CD8-positive, alpha-beta T cell (primary cell): ENCODE measurements at regions of chr13 and their contacts with region 1.

Region 1: DNA sequence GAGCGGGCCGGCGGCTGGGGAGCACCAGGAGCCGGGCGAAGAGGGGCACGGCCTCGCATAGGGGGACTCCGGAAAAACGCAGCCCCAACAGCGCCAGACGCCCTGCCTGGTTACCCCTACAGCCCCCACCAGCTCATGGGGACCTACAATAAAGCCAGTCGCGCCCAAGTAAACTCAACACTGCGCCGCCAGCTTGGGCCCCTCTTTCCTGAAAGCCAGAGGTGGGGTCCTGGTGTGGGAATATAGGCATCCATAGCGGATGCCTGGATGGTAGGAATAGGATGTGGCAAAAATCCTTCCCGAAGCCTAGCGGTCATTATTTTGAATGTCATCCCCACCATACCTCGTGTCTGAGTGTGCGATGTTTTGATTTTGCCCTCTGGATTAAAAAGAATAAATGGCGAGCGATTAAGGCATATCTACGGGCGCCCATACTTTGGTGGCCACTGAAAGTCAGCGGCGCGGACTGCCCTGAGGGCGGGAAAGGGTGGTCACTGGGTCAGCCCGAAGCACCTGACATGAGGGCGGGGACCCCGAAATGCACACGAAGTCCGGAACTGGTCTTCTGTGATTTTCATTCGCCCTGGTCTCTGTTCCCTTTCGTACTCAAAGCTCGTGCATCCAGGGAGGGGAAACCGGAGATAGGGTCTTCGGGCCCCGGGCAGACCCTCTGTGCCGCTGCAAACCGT is at the starts of genes NHLRC3 and PROSER1:
- DNase-seq: peak; percentile 76 to 95 (median 88)
- ATAC-seq: peak; percentile 89
- H3K4me3 ChIP-seq: peak within 1 kb of the TSS; percentile 66 to 93
- H3K4me3 Mint-ChIP-seq: peak within 1 kb of the TSS; percentile 94
- H3K27ac ChIP-seq: peak within 1 kb of the TSS; percentile 79 to 81
- H3K27ac Mint-ChIP-seq: peak within 1 kb of the TSS; percentile 99
- H3K4me1 ChIP-seq: peaks cover 30% of the 10 kb centered on the region
- H3K4me1 Mint-ChIP-seq: peaks cover 63% of the 10 kb centered on the region
- H3K27me3 ChIP-seq: no peaks in the 10 kb centered on the region
- H3K27me3 Mint-ChIP-seq: no peaks in the 10 kb centered on the region
- CTCF ChIP-seq: no peak
- total RNA-seq, gene NHLRC3: 8.2 to 9.3 TPM
- total RNA-seq, gene PROSER1: 51.8 to 52.4 TPM

Region 2: GRCh38 chr13:37058910-37059847 is 1978.8 kb before region 1 on chr13 and contains the start of gene SUPT20H:
- CTCF ChIA-PET with region 1: no interaction called
- POLR2A ChIA-PET with region 1: interaction called, 4 read pairs
- intact Hi-C with region 1: loop called (anchors 2 to 5 kb)
- DNase-seq: peak; percentile 90 to 97 (median 95)
- ATAC-seq: peak; percentile 91
- H3K4me3 ChIP-seq: peak within 1 kb of the TSS; percentile 93 to 96
- H3K4me3 Mint-ChIP-seq: peak within 1 kb of the TSS; percentile 90
- H3K27ac ChIP-seq: peak within 1 kb of the TSS; percentile 95 to 96
- H3K27ac Mint-ChIP-seq: peak within 1 kb of the TSS; percentile 99
- H3K4me1 ChIP-seq: peaks cover 24% of the 10 kb centered on the region
- H3K4me1 Mint-ChIP-seq: peaks cover 50% of the 10 kb centered on the region
- H3K27me3 ChIP-seq: no peaks in the 10 kb centered on the region
- H3K27me3 Mint-ChIP-seq: no peaks in the 10 kb centered on the region
- CTCF ChIP-seq: no peak
- total RNA-seq, gene SUPT20H: 53.0 to 55.0 TPM

Region 3: DNA sequence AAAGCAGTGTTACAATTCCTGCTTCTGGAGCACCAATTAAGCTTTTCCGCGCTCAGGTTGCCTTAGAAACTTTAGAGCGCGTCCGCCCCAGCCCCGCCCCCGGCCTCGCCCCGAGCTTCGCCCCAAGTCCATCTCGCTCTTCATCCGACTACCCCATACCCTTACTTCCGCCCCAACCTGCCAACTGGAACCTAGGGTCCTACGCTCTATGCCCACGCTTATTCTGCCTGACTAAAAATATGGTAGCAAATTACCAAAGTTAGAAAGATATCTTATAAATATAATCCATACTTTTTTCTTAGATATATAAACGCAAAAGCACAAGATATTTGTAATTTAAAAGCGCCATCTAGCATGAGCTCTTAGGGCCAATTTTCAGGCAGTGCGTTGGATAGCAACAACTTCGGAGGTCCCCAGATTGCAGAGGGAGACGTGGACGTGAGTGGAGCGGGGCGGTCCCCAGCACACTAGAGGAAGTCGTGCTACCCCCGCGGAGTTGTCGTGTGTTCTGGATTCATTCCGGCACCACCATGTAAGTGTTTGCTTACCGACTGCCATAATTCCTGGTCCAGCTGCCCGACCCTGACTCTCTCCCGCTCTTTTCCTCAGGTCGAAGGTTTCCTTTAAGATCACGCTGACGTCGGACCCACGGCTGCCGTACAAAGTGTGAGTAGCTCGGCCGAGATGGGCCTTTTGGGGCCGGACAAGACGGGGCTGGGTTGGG is 688.5 kb before region 1 on chr13 and contains the start of gene UFM1:
- CTCF ChIA-PET with region 1: no interaction called
- POLR2A ChIA-PET with region 1: interaction called, 15 read pairs
- intact Hi-C with region 1: loop called in 1 of 2 experiments (anchors 2 kb)
- DNase-seq: peak; percentile 68 to 95 (median 86)
- ATAC-seq: peak; percentile 94
- H3K4me3 ChIP-seq: peak within 1 kb of the TSS; percentile 82 to 92
- H3K4me3 Mint-ChIP-seq: peak within 1 kb of the TSS; percentile 99
- H3K27ac ChIP-seq: peak within 1 kb of the TSS; percentile 85 to 93
- H3K27ac Mint-ChIP-seq: peak within 1 kb of the TSS; percentile 99
- H3K4me1 ChIP-seq: peaks cover 21% of the 10 kb centered on the region
- H3K4me1 Mint-ChIP-seq: peaks cover 42% of the 10 kb centered on the region
- H3K27me3 ChIP-seq: no peaks in the 10 kb centered on the region
- H3K27me3 Mint-ChIP-seq: no peaks in the 10 kb centered on the region
- CTCF ChIP-seq: no peak
- total RNA-seq, gene UFM1: 94.0 to 97.0 TPM

Region 4: DNA sequence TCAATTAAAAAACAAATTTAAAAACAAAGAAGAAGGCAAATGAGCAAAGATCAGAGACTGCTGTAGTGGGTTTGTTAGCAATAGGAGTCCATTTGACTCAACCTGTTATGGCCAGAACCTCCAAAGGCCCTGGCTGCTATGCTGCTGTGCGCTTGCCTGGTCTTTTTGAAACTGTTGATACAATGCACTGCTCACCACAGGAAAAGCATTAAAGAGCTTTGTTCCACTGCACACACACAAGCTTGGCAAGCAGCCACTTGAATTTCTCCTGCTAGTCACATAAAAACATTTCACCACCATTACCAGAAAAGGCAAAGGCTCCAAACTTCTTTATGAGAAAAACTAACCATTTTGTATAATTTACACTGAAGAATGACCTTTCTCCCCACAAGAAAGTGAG is 219.0 kb before region 1 on chr13:
- CTCF ChIA-PET with region 1: no interaction called
- POLR2A ChIA-PET with region 1: no interaction called
- intact Hi-C with region 1: no loop called
- DNase-seq: no peak
- ATAC-seq: no peak
- H3K4me3 ChIP-seq: no peak overlapping the region
- H3K4me3 Mint-ChIP-seq: no peak overlapping the region
- H3K27ac ChIP-seq: no peak overlapping the region
- H3K27ac Mint-ChIP-seq: no peak overlapping the region
- H3K4me1 ChIP-seq: no peaks in the 10 kb centered on the region
- H3K4me1 Mint-ChIP-seq: no peaks in the 10 kb centered on the region
- H3K27me3 ChIP-seq: no peaks in the 10 kb centered on the region
- H3K27me3 Mint-ChIP-seq: no peaks in the 10 kb centered on the region
- CTCF ChIP-seq: no peak

Region 5: DNA sequence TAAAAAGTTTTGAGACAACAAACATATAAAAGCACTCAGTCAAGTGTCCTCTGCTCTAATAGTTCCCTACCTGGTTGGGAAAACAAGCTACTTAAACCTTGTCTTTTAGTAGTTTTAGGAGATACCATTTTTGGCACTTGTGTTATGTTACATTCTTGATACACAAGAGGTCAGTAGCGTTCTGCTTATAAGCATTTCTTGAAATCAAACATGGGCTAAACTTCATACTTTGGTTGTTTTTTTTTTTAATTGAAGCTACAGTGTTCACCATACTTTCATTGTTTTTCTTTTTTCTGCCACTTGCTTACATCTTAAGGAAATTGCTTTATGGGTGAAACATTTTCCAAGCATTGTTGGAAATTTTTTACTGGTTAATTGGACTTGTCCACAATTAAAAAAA is 13.1 kb after region 1 on chr13:
- CTCF ChIA-PET with region 1: no interaction called
- POLR2A ChIA-PET with region 1: interaction called, 15 read pairs
- intact Hi-C with region 1: no loop called
- DNase-seq: peak in 2 of 9 experiments; percentile 37 to 52
- ATAC-seq: no peak
- H3K4me3 ChIP-seq: no peak overlapping the region
- H3K4me3 Mint-ChIP-seq: no peak overlapping the region
- H3K27ac ChIP-seq: no peak overlapping the region
- H3K27ac Mint-ChIP-seq: no peak overlapping the region
- H3K4me1 ChIP-seq: peaks cover 8% of the 10 kb centered on the region
- H3K4me1 Mint-ChIP-seq: peaks cover 15% of the 10 kb centered on the region
- H3K27me3 ChIP-seq: no peaks in the 10 kb centered on the region
- H3K27me3 Mint-ChIP-seq: no peaks in the 10 kb centered on the region
- CTCF ChIP-seq: no peak

Region 6: GRCh38 chr13:39073992-39074391 is 36.0 kb after region 1 on chr13:
- CTCF ChIA-PET with region 1: no interaction called
- POLR2A ChIA-PET with region 1: no interaction called
- intact Hi-C with region 1: no loop called
- DNase-seq: no peak
- ATAC-seq: no peak
- H3K4me3 ChIP-seq: no peak overlapping the region
- H3K4me3 Mint-ChIP-seq: no peak overlapping the region
- H3K27ac ChIP-seq: no peak overlapping the region
- H3K27ac Mint-ChIP-seq: no peak overlapping the region
- H3K4me1 ChIP-seq: no peaks in the 10 kb centered on the region
- H3K4me1 Mint-ChIP-seq: no peaks in the 10 kb centered on the region
- H3K27me3 ChIP-seq: peaks cover 0 to 7% of the 10 kb centered on the region in 2 experiments
- H3K27me3 Mint-ChIP-seq: peaks cover 33% of the 10 kb centered on the region
- CTCF ChIP-seq: no peak

Region 7: GRCh38 chr13:39655569-39656324 is 617.7 kb after region 1 on chr13 and contains the start of gene COG6:
- CTCF ChIA-PET with region 1: no interaction called
- POLR2A ChIA-PET with region 1: no interaction called
- intact Hi-C with region 1: loop called (anchors 2 to 5 kb)
- DNase-seq: peak; percentile 90 to 99 (median 96)
- ATAC-seq: peak; percentile 87
- H3K4me3 ChIP-seq: peak within 1 kb of the TSS; percentile 96 to 97
- H3K4me3 Mint-ChIP-seq: peak within 1 kb of the TSS; percentile 98
- H3K27ac ChIP-seq: peak within 1 kb of the TSS; percentile 68 to 70
- H3K27ac Mint-ChIP-seq: peak within 1 kb of the TSS; percentile 93
- H3K4me1 ChIP-seq: peaks cover 6% of the 10 kb centered on the region
- H3K4me1 Mint-ChIP-seq: peaks cover 36% of the 10 kb centered on the region
- H3K27me3 ChIP-seq: peaks cover 0 to 4% of the 10 kb centered on the region in 2 experiments
- H3K27me3 Mint-ChIP-seq: no peaks in the 10 kb centered on the region
- CTCF ChIP-seq: no peak
- total RNA-seq, gene COG6: 10.1 to 18.3 TPM

Region 8: GRCh38 chr13:39676315-39676876 is 638.4 kb after region 1 on chr13:
- CTCF ChIA-PET with region 1: no interaction called
- POLR2A ChIA-PET with region 1: no interaction called
- intact Hi-C with region 1: loop called in 1 of 2 experiments (anchors 5 kb)
- DNase-seq: peak in 5 of 9 experiments; percentile 12 to 69 (median 27)
- ATAC-seq: no peak
- H3K4me3 ChIP-seq: no peak overlapping the region
- H3K4me3 Mint-ChIP-seq: no peak overlapping the region
- H3K27ac ChIP-seq: no peak overlapping the region
- H3K27ac Mint-ChIP-seq: no peak overlapping the region
- H3K4me1 ChIP-seq: no peaks in the 10 kb centered on the region
- H3K4me1 Mint-ChIP-seq: no peaks in the 10 kb centered on the region
- H3K27me3 ChIP-seq: no peaks in the 10 kb centered on the region
- H3K27me3 Mint-ChIP-seq: no peaks in the 10 kb centered on the region
- CTCF ChIP-seq: peak; percentile 81